Activated B cell treated with CpG ODN at 0.5 μM for 24 hours (primary cell): ENCODE measurements at regions of chr17 and their contacts with region 1.

Region 1: GRCh38 chr17:75524953-75525719 is at the start of gene LLGL2:
- DNase-seq: peak; percentile 88
- ATAC-seq: peak; percentile 94
- H3K4me3 Mint-ChIP-seq: peak within 1 kb of the TSS; percentile 77
- H3K27ac Mint-ChIP-seq: peak within 1 kb of the TSS; percentile 18
- H3K4me1 Mint-ChIP-seq: peaks cover 10% of the 10 kb centered on the region
- H3K27me3 Mint-ChIP-seq: no peaks in the 10 kb centered on the region
- CTCF ChIP-seq: no peak
- total RNA-seq, gene LLGL2: 27.5 and 29.9 TPM in 2 replicates

Region 2: GRCh38 chr17:74659898-74660297 is 865.2 kb before region 1 on chr17:
- CTCF ChIA-PET with region 1: no interaction called
- POLR2A ChIA-PET with region 1: no interaction called
- intact Hi-C with region 1: no loop called
- DNase-seq: no peak
- ATAC-seq: no peak
- H3K4me3 Mint-ChIP-seq: no peak overlapping the region
- H3K27ac Mint-ChIP-seq: no peak overlapping the region
- H3K4me1 Mint-ChIP-seq: peaks cover 4% of the 10 kb centered on the region
- H3K27me3 Mint-ChIP-seq: peaks cover 44% of the 10 kb centered on the region
- CTCF ChIP-seq: no peak

Region 3: DNA sequence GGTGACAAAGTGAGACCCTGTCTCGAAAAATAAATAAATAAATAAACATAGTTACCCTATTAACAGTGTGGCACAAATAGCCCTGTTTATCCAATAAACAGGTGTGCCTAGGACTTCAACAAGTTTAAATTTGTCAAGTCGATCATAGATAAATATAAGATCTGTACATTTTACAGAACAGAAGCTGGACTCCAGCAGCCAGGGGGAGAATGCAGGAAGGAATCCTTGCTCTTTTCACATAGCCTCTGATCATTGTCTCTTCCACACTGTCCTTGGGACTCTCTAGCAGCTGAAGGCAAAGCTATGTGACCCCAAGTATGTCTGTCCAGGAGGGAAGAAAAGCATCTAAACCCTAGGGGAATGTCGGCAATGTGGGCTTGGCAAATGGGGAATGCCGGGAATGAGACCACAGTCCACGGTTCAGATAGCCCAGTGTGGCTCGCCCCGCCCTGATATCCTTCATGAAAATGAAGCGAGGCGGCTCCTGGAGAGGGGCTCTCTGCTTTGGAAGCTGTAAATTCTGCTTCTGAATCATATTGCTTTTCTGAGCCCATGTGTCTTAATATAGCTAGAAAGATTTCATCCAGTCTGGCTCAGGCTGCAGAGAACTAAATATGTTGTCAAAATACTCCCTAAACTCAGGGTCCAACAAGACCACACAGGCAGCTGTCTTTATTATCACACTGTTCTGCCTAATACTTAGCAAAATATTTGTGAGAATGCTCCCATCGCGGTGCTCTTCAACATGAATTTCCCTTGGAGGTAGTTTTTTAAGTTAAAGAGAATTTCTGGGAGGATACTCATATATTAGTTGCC is 94.8 kb before region 1 on chr17:
- CTCF ChIA-PET with region 1: no interaction called
- POLR2A ChIA-PET with region 1: no interaction called
- intact Hi-C with region 1: loop called (anchors 2 kb)
- DNase-seq: no peak
- ATAC-seq: no peak
- H3K4me3 Mint-ChIP-seq: no peak overlapping the region
- H3K27ac Mint-ChIP-seq: no peak overlapping the region
- H3K4me1 Mint-ChIP-seq: peaks cover 10% of the 10 kb centered on the region
- H3K27me3 Mint-ChIP-seq: peaks cover 9% of the 10 kb centered on the region
- CTCF ChIP-seq: no peak

Region 4: GRCh38 chr17:75456417-75457046 is 68.6 kb before region 1 on chr17 and contains the start of gene TMEM94:
- CTCF ChIA-PET with region 1: interaction called, 3 read pairs
- POLR2A ChIA-PET with region 1: interaction called, 4 read pairs
- intact Hi-C with region 1: loop called (anchors 2 kb)
- DNase-seq: peak; percentile 74
- ATAC-seq: peak; percentile 94
- H3K4me3 Mint-ChIP-seq: peak within 1 kb of the TSS; percentile 91
- H3K27ac Mint-ChIP-seq: peak within 1 kb of the TSS; percentile 88
- H3K4me1 Mint-ChIP-seq: peaks cover 41% of the 10 kb centered on the region
- H3K27me3 Mint-ChIP-seq: no peaks in the 10 kb centered on the region
- CTCF ChIP-seq: no peak
- total RNA-seq, gene TMEM94: 80.3 and 86.6 TPM in 2 replicates

Region 5: DNA sequence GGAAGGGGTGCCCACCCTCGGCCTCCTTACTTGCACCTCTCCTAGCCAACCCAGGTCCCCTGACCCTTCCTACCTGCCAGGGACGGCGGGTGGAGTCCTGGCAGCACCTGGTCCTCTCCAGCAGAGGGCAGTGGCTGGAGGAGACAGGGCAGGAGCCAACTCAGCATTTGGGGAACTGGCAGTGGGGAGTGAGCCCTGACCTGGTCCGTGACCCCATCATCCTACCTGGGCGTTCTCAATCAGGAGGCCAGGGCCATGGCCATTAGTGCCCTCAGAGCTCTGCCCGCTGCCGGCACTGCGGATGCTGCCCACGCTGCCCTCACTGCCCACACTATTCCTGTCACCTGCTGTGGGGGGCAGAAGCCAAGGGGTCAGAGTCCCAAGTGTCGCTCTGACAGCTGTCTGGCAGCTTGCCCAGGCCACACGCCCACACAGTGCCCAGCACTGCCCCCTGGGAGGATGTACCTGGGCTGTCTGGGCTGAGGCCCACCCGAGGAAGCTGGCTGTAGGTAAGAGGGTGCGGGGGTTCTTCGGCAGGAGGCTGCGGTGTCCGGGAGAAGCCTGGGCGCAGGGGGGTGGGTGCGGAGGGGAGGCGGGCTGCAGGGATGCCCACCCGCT is 20.7 kb before region 1 on chr17:
- CTCF ChIA-PET with region 1: interaction called, 5 read pairs
- POLR2A ChIA-PET with region 1: no interaction called
- intact Hi-C with region 1: loop called (anchors 1 kb)
- DNase-seq: peak; percentile 41
- ATAC-seq: peak; percentile 91
- H3K4me3 Mint-ChIP-seq: no peak overlapping the region
- H3K27ac Mint-ChIP-seq: no peak overlapping the region
- H3K4me1 Mint-ChIP-seq: peaks cover 2% of the 10 kb centered on the region
- H3K27me3 Mint-ChIP-seq: no peaks in the 10 kb centered on the region
- CTCF ChIP-seq: no peak

Region 6: GRCh38 chr17:75571197-75571873 is 46.2 kb after region 1 on chr17:
- CTCF ChIA-PET with region 1: interaction called, 3 read pairs
- POLR2A ChIA-PET with region 1: interaction called, 8 read pairs
- intact Hi-C with region 1: loop called (anchors 2 kb)
- DNase-seq: peak; percentile 56
- ATAC-seq: peak; percentile 98
- H3K4me3 Mint-ChIP-seq: peak overlapping the region; percentile 64
- H3K27ac Mint-ChIP-seq: peak overlapping the region; percentile 92
- H3K4me1 Mint-ChIP-seq: peaks cover 22% of the 10 kb centered on the region
- H3K27me3 Mint-ChIP-seq: no peaks in the 10 kb centered on the region
- CTCF ChIP-seq: no peak